Endothelial cell of umbilical vein (primary cell): ENCODE measurements at regions of chr22 and their contacts with region 1.

Region 1: GRCh38 chr22:37676736-37677492 is 1.5 kb downstream of the LGALS1 start:
- DNase-seq: peak; percentile 95
- H3K4me3 ChIP-seq: peak overlapping the region; percentile 63 to 80 (median 66)
- H3K27ac ChIP-seq: peak overlapping the region; percentile 81
- H3K4me1 ChIP-seq: peaks cover 9% of the 10 kb centered on the region
- H3K27me3 ChIP-seq: no peaks in the 10 kb centered on the region
- CTCF ChIP-seq: no peak
- POLR2A ChIP-seq: peak; percentile 81

Region 2: GRCh38 chr22:37486224-37486845 is 190.6 kb before region 1 on chr22 and contains the start of gene MFNG:
- CTCF ChIA-PET with region 1: no interaction called
- POLR2A ChIA-PET with region 1: no interaction called
- dilution Hi-C with region 1: no loop called
- intact Hi-C with region 1: no loop called
- DNase-seq: peak; percentile 80
- H3K4me3 ChIP-seq: peak within 1 kb of the TSS; percentile 61 to 90 (median 81)
- H3K27ac ChIP-seq: peak within 1 kb of the TSS; percentile 83
- H3K4me1 ChIP-seq: peaks cover 34% of the 10 kb centered on the region
- H3K27me3 ChIP-seq: no peaks in the 10 kb centered on the region
- CTCF ChIP-seq: peak; percentile 9 to 12
- POLR2A ChIP-seq: peak; percentile 96
- total RNA-seq, gene MFNG: 188 and 197 TPM in 2 replicates

Region 3: DNA sequence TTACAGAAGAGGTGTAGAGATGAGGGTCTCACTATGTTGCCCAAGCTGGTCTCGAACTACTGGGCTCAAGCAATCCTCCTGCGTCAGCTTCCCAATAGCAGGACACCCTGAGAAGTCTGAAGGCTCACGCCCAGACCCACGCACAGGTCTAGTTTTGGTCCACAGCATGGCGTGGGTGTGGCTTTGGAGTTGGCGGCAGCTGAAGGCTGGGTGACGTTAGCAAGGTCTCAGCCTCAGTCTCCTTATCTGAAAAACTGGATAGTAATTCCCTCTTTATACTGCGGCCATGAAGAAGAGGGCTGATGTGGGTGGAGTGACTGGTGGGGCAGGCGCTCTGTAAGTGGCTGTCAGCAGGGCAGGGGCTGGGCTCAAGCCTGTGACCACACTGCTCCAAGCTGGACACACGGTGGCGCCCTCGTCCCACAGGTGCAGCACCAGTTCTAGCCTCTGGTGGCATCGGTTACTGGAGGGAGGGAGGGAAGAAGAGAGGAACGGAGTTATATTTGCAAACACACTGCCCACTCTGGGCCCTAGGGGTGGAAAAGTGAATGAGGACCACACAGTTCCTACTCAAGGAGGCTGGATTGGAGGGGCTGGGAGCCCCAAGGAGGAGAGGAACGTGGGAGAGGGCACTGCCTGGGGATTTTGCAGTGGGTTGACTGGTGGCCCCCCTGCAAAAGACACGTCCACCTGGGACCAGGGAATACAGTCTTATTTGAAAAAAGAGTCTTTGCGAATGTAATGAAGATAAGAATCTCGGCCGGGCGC is 138.1 kb before region 1 on chr22:
- CTCF ChIA-PET with region 1: interaction called, 9 read pairs
- POLR2A ChIA-PET with region 1: no interaction called
- dilution Hi-C with region 1: no loop called
- intact Hi-C with region 1: loop called (anchors 2 kb)
- DNase-seq: peak; percentile 91
- H3K4me3 ChIP-seq: no peak overlapping the region
- H3K27ac ChIP-seq: no peak overlapping the region
- H3K4me1 ChIP-seq: peaks cover 3% of the 10 kb centered on the region
- H3K27me3 ChIP-seq: no peaks in the 10 kb centered on the region
- CTCF ChIP-seq: peak; percentile 95 to 98
- POLR2A ChIP-seq: no peak

Region 4: DNA sequence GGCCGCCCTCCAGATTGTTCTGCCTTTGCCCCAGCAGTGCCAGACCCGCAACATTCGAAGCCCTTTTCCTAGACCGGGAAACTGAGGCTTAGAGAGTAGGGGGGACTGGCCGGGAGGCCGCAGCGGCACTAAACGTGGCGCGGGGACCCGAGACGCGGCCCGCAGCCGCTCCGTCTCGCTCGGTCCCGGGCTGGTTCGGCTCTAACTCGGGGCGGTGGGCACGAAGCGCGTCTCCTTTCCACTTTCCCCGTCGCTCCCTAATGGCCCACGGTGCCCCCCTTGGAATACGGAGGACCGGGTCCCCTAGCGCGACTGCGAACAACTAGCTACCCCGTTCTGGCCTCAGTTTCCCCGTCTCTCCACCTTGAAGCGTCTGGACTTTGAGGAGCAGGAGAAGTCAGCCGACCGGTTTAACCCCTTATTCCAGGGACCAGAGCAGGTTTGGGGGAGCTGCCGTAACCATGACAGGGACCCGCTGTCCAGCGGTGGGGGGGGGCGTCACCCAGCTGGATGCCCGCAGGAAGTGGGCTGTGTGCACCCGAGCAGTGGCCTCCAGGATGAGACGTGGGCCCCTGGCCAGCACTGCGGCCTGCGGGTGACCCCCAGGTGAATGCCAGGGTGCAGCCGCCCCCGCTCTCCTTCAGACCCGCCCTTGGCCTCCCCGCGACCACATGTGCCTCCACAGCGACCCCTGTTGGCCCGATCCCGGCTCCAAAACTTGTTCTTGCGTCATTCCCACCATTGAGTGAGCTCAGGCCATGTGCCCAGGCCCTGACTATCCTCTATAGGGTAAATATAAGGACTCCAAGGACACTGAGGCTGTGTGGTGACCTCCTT is 115.5 kb before region 1 on chr22:
- CTCF ChIA-PET with region 1: interaction called, 4 read pairs
- POLR2A ChIA-PET with region 1: interaction called, 3 read pairs
- dilution Hi-C with region 1: no loop called
- intact Hi-C with region 1: loop called (anchors 5 kb)
- DNase-seq: peak; percentile 88
- H3K4me3 ChIP-seq: peak overlapping the region; percentile 71 to 86 (median 74)
- H3K27ac ChIP-seq: peak overlapping the region; percentile 99
- H3K4me1 ChIP-seq: peaks cover 61% of the 10 kb centered on the region
- H3K27me3 ChIP-seq: no peaks in the 10 kb centered on the region
- CTCF ChIP-seq: peak; percentile 94
- POLR2A ChIP-seq: peak; percentile 47

Region 5: GRCh38 chr22:37623075-37624016 is 53.6 kb before region 1 on chr22:
- CTCF ChIA-PET with region 1: interaction called, 3 read pairs
- POLR2A ChIA-PET with region 1: interaction called, 7 read pairs
- dilution Hi-C with region 1: no loop called
- intact Hi-C with region 1: loop called (anchors 1 kb)
- DNase-seq: peak; percentile 44
- H3K4me3 ChIP-seq: no peak overlapping the region
- H3K27ac ChIP-seq: no peak overlapping the region
- H3K4me1 ChIP-seq: peaks cover 7% of the 10 kb centered on the region
- H3K27me3 ChIP-seq: no peaks in the 10 kb centered on the region
- CTCF ChIP-seq: peak; percentile 51 to 87
- POLR2A ChIP-seq: no peak

Region 6: GRCh38 chr22:37633625-37634416 is 43.1 kb before region 1 on chr22:
- CTCF ChIA-PET with region 1: interaction called, 11 read pairs
- POLR2A ChIA-PET with region 1: no interaction called
- dilution Hi-C with region 1: no loop called
- intact Hi-C with region 1: no loop called
- DNase-seq: peak; percentile 72
- H3K4me3 ChIP-seq: no peak overlapping the region
- H3K27ac ChIP-seq: peak overlapping the region; percentile 72
- H3K4me1 ChIP-seq: peaks cover 17% of the 10 kb centered on the region
- H3K27me3 ChIP-seq: no peaks in the 10 kb centered on the region
- CTCF ChIP-seq: peak in 1 of 2 donors; percentile 44
- POLR2A ChIP-seq: no peak

Region 7: DNA sequence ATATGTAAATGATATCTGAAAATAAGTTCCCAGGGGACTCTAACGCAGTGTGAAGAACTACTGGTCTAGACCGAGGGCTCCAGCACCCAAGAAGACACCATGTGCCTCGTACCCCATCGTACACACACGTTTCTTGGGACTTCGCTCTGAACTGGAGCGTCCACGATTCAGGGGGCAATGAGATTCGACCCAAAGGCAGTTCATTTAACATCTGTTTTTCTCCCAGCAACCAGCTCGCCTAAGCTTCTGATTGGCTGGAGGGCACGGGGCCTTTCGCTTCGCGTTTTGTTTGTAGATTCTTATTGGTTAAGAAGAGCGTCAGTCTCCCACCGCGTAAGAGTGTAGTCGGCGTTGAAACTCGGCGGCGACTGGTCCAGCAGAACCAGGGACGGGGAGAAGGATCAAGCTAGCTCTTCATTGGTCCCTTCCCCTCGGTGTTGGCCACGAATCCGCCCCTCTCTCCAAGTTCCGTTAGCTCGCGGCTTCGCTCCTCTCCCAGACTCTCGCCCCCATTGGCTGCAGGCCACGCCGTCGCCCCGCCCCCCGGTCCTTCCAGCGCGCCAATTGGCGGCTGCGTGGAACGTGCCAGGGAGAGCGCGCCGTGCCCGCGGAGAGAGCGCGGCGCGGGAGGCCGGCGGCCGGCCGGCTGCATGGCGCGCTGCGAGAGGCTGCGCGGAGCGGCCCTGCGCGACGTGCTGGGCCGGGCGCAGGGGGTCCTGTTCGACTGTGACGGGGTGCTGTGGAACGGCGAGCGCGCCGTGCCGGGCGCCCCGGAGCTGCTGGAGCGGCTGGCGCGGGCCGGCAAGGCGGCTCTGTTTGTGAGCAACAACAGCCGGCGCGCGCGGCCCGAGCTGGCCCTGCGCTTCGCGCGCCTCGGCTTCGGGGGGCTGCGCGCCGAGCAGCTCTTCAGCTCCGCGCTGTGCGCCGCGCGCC is 18.5 kb before region 1 on chr22 and contains the start of gene PDXP:
- CTCF ChIA-PET with region 1: interaction called, 220 read pairs
- POLR2A ChIA-PET with region 1: interaction called, 8 read pairs
- dilution Hi-C with region 1: no loop called
- intact Hi-C with region 1: loop called (anchors 1 kb)
- DNase-seq: peak; percentile 100
- H3K4me3 ChIP-seq: peak within 1 kb of the TSS; percentile 18 to 85 (median 54)
- H3K27ac ChIP-seq: peak within 1 kb of the TSS; percentile 7
- H3K4me1 ChIP-seq: peaks cover 17% of the 10 kb centered on the region
- H3K27me3 ChIP-seq: no peaks in the 10 kb centered on the region
- CTCF ChIP-seq: no peak
- POLR2A ChIP-seq: peak; percentile 73
- total RNA-seq, gene PDXP: 14.8 and 18.0 TPM in 2 replicates

Region 8: GRCh38 chr22:37792494-37792893 is 115.6 kb after region 1 on chr22:
- CTCF ChIA-PET with region 1: interaction called, 4 read pairs
- POLR2A ChIA-PET with region 1: no interaction called
- dilution Hi-C with region 1: no loop called
- intact Hi-C with region 1: loop called (anchors 5 kb)
- DNase-seq: no peak
- H3K4me3 ChIP-seq: no peak overlapping the region
- H3K27ac ChIP-seq: no peak overlapping the region
- H3K4me1 ChIP-seq: no peaks in the 10 kb centered on the region
- H3K27me3 ChIP-seq: no peaks in the 10 kb centered on the region
- CTCF ChIP-seq: no peak
- POLR2A ChIP-seq: no peak

Region 9: GRCh38 chr22:37807410-37808293 is 130.7 kb after region 1 on chr22 and contains the start of gene GCAT:
- CTCF ChIA-PET with region 1: no interaction called
- POLR2A ChIA-PET with region 1: no interaction called
- dilution Hi-C with region 1: no loop called
- intact Hi-C with region 1: no loop called
- DNase-seq: peak; percentile 98
- H3K4me3 ChIP-seq: peak within 1 kb of the TSS; percentile 64 to 79 (median 66)
- H3K27ac ChIP-seq: peak within 1 kb of the TSS; percentile 30
- H3K4me1 ChIP-seq: peaks cover 31% of the 10 kb centered on the region
- H3K27me3 ChIP-seq: no peaks in the 10 kb centered on the region
- CTCF ChIP-seq: no peak
- POLR2A ChIP-seq: peak; percentile 80
- total RNA-seq, gene GCAT: 19.7 and 19.9 TPM in 2 replicates